Activated CD8-positive, alpha-beta T cell treated with anti-CD3 and anti-CD28 coated beads for 36 hours (primary cell): ENCODE measurements at regions of chr10 and their contacts with region 1.

Region 1: GRCh38 chr10:122565728-122566206 is 5.2 kb downstream of the DMBT1 start:
- DNase-seq: peak; percentile 87
- ATAC-seq: peak; percentile 34
- H3K4me3 Mint-ChIP-seq: no peak overlapping the region
- H3K27ac Mint-ChIP-seq: no peak overlapping the region
- H3K4me1 Mint-ChIP-seq: peaks cover 7% of the 10 kb centered on the region
- H3K27me3 Mint-ChIP-seq: peaks cover 29% of the 10 kb centered on the region
- CTCF ChIP-seq: peak; percentile 78

Region 2: GRCh38 chr10:122298598-122299301 is 267.0 kb before region 1 on chr10:
- CTCF ChIA-PET with region 1: interaction called, 62 read pairs
- POLR2A ChIA-PET with region 1: no interaction called
- intact Hi-C with region 1: loop called (anchors 2 kb)
- DNase-seq: peak; percentile 81
- ATAC-seq: peak; percentile 96
- H3K4me3 Mint-ChIP-seq: no peak overlapping the region
- H3K27ac Mint-ChIP-seq: no peak overlapping the region
- H3K4me1 Mint-ChIP-seq: peaks cover 6% of the 10 kb centered on the region
- H3K27me3 Mint-ChIP-seq: peaks cover 2% of the 10 kb centered on the region
- CTCF ChIP-seq: peak; percentile 94

Region 3: GRCh38 chr10:122435212-122435827 is 130.4 kb before region 1 on chr10:
- CTCF ChIA-PET with region 1: interaction called, 29 read pairs
- POLR2A ChIA-PET with region 1: no interaction called
- intact Hi-C with region 1: no loop called
- DNase-seq: no peak
- ATAC-seq: no peak
- H3K4me3 Mint-ChIP-seq: no peak overlapping the region
- H3K27ac Mint-ChIP-seq: no peak overlapping the region
- H3K4me1 Mint-ChIP-seq: no peaks in the 10 kb centered on the region
- H3K27me3 Mint-ChIP-seq: no peaks in the 10 kb centered on the region
- CTCF ChIP-seq: peak; percentile 92

Region 4: GRCh38 chr10:122459561-122460273 is 106.0 kb before region 1 on chr10:
- CTCF ChIA-PET with region 1: interaction called, 12 read pairs
- POLR2A ChIA-PET with region 1: no interaction called
- intact Hi-C with region 1: loop called (anchors 10 kb)
- DNase-seq: no peak
- ATAC-seq: no peak
- H3K4me3 Mint-ChIP-seq: no peak overlapping the region
- H3K27ac Mint-ChIP-seq: no peak overlapping the region
- H3K4me1 Mint-ChIP-seq: peaks cover 7% of the 10 kb centered on the region
- H3K27me3 Mint-ChIP-seq: peaks cover 56% of the 10 kb centered on the region
- CTCF ChIP-seq: no peak

Region 5: GRCh38 chr10:122510326-122510725 is 55.4 kb before region 1 on chr10:
- CTCF ChIA-PET with region 1: interaction called, 47 read pairs
- POLR2A ChIA-PET with region 1: interaction called, 3 read pairs
- intact Hi-C with region 1: no loop called
- DNase-seq: no peak
- ATAC-seq: no peak
- H3K4me3 Mint-ChIP-seq: no peak overlapping the region
- H3K27ac Mint-ChIP-seq: no peak overlapping the region
- H3K4me1 Mint-ChIP-seq: peaks cover 24% of the 10 kb centered on the region
- H3K27me3 Mint-ChIP-seq: peaks cover 2% of the 10 kb centered on the region
- CTCF ChIP-seq: no peak

Region 6: GRCh38 chr10:122543676-122544445 is 21.9 kb before region 1 on chr10:
- CTCF ChIA-PET with region 1: interaction called, 10 read pairs
- POLR2A ChIA-PET with region 1: interaction called, 3 read pairs
- intact Hi-C with region 1: no loop called
- DNase-seq: no peak
- ATAC-seq: no peak
- H3K4me3 Mint-ChIP-seq: no peak overlapping the region
- H3K27ac Mint-ChIP-seq: no peak overlapping the region
- H3K4me1 Mint-ChIP-seq: peaks cover 15% of the 10 kb centered on the region
- H3K27me3 Mint-ChIP-seq: no peaks in the 10 kb centered on the region
- CTCF ChIP-seq: no peak